Activated CD8-positive, alpha-beta T cell treated with anti-CD3 and anti-CD28 coated beads for 36 hours (primary cell): ENCODE measurements at regions of chr3 and their contacts with region 1.

Region 1: GRCh38 chr3:13884851-13885703 is 5.2 kb upstream of the WNT7A start:
- DNase-seq: peak; percentile 78
- ATAC-seq: peak; percentile 70
- H3K4me3 Mint-ChIP-seq: no peak overlapping the region
- H3K27ac Mint-ChIP-seq: no peak overlapping the region
- H3K4me1 Mint-ChIP-seq: no peaks in the 10 kb centered on the region
- H3K27me3 Mint-ChIP-seq: peaks cover 18% of the 10 kb centered on the region
- CTCF ChIP-seq: peak; percentile 92

Region 2: DNA sequence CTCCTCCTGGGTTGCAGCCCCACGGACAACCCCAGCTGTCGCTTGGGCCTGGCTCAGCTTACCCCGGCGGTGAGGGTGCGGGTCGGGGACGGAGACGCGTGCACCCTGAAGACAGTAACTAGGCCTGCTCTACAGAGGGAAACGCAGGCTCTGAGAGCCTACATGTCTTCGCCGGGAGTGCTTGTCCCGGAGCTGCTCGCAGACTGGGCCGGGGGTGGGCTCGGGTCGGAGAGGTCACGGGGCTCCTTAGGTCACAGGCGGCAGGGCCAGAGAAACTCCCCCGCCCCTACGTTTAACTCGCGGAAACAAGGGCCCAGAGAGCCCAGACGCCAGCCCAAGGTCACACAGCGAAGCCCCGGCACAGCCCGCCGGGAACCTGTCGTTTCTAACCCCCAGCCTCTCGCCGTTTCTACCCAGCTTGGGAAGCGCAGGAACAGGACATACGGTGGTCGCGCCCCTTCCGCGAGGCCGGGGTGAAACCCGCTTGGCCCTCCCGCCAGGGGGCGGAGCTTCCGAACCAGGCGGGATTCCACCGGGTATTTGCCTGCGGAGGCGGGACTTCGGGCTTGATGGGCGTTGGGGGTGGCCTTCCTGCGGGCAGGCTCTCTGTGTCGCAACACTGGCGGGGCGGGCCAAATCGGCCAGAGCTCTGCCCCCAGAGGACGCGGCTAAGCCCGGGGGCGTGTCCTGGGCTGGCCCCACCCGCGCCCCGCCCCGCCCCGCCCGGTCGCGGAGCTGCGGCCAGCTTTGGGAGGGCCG is 405.3 kb before region 1 on chr3 and contains the start of gene HDAC11:
- CTCF ChIA-PET with region 1: interaction called, 3 read pairs
- POLR2A ChIA-PET with region 1: no interaction called
- intact Hi-C with region 1: loop called (anchors 10 kb)
- DNase-seq: peak; percentile 98
- ATAC-seq: peak; percentile 97
- H3K4me3 Mint-ChIP-seq: peak within 1 kb of the TSS; percentile 90
- H3K27ac Mint-ChIP-seq: peak within 1 kb of the TSS; percentile 89
- H3K4me1 Mint-ChIP-seq: peaks cover 20% of the 10 kb centered on the region
- H3K27me3 Mint-ChIP-seq: no peaks in the 10 kb centered on the region
- CTCF ChIP-seq: no peak
- total RNA-seq, gene HDAC11: 1.8 to 2.0 TPM

Region 3: DNA sequence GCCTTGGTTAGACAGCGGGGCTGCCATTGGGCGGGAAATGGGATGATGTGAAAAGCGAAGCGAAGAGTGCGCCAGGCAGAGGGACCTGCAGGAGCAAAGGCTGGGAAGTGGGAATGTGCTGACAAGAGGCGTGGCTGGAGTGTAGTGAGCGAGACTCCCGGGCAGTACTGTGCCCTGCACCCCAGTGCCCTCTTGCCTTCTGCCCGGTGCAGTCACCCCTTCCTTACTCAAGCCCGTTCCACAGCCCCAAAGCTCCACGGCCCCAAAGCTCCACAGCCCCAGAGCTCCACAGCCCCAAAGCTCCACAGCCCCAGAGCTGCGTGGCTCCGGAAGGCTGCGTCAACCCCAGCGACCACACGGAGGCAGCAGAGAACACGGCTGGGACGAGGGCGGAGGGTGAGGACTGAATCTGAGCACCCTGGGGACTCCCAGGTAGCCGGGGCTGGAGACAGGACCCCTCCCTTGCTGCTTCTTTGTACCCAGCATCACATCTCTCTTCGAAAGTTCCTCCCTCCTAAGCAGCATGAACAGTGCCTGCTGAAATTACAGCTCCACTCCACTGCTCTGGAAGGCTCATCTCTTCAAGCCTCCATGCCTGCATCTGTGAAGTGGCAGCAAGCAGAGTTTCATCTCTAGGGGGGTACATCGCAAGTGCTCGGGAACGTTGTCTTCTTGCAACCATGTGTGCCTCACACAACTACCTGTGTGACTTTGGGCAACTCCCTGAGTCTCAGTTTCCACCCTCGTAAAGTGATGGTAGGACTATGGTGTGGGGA is 227.2 kb before region 1 on chr3:
- CTCF ChIA-PET with region 1: interaction called, 383 read pairs
- POLR2A ChIA-PET with region 1: interaction called, 10 read pairs
- intact Hi-C with region 1: loop called (anchors 2 kb)
- DNase-seq: peak; percentile 71
- ATAC-seq: peak; percentile 78
- H3K4me3 Mint-ChIP-seq: no peak overlapping the region
- H3K27ac Mint-ChIP-seq: no peak overlapping the region
- H3K4me1 Mint-ChIP-seq: peaks cover 18% of the 10 kb centered on the region
- H3K27me3 Mint-ChIP-seq: peaks cover 11% of the 10 kb centered on the region
- CTCF ChIP-seq: peak; percentile 62

Region 4: GRCh38 chr3:13872451-13872850 is 12.6 kb before region 1 on chr3:
- CTCF ChIA-PET with region 1: interaction called, 23 read pairs
- POLR2A ChIA-PET with region 1: interaction called, 3 read pairs
- intact Hi-C with region 1: no loop called
- DNase-seq: no peak
- ATAC-seq: no peak
- H3K4me3 Mint-ChIP-seq: no peak overlapping the region
- H3K27ac Mint-ChIP-seq: no peak overlapping the region
- H3K4me1 Mint-ChIP-seq: peaks cover 13% of the 10 kb centered on the region
- H3K27me3 Mint-ChIP-seq: peaks cover 4% of the 10 kb centered on the region
- CTCF ChIP-seq: no peak

Region 5: DNA sequence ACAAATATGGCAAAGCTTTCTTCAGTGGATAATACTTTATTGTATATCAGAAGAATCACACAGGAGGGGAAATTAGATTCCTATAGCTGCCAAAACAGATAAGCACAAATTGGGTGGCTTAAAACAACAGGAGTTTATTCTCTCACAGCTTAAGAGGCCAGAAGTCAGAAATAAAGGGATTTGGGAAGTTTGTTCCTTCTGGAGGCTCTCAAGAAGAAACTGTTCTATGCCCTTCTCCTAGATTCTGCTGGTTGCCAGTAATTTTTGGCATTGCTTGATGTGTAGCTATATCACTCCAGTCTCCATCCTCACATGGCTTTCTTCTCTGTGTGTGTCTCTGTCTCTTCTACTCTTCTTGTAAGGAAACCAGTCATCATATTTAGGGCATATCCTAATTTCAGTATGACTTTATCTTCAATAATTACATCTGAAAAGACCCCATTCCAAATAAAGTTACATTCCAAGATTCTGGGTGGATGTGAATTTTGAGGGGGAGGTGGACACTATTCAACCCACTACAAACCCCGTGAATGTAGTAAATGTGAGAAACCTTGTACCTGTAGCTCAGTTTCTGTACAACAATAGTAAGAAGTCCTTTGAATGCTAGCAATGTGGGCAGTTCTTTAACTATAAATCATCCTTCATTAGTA is 17.0 kb after region 1 on chr3:
- CTCF ChIA-PET with region 1: interaction called, 13 read pairs
- POLR2A ChIA-PET with region 1: no interaction called
- intact Hi-C with region 1: no loop called
- DNase-seq: no peak
- ATAC-seq: no peak
- H3K4me3 Mint-ChIP-seq: no peak overlapping the region
- H3K27ac Mint-ChIP-seq: no peak overlapping the region
- H3K4me1 Mint-ChIP-seq: no peaks in the 10 kb centered on the region
- H3K27me3 Mint-ChIP-seq: no peaks in the 10 kb centered on the region
- CTCF ChIP-seq: no peak